ENCODE measurements at regions of chr6 and their contacts with region 1.

Region 1: GRCh38 chr6:35583893-35584688 is 71.4 kb upstream of the TULP1 start:
- DNase-seq: peak; percentile 76
- H3K4me3 ChIP-seq: no peak overlapping the region
- H3K27ac ChIP-seq: peak overlapping the region; percentile 7 to 45 (median 24)
- H3K4me1 ChIP-seq: peaks cover 6 to 42% (median 16%) of the 10 kb centered on the region in 4 donors
- H3K27me3 ChIP-seq: no peaks in the 10 kb centered on the region
- CTCF ChIP-seq: peak; percentile 70 to 79 (median 74)
- EP300 ChIP-seq: no peak
- POLR2A ChIP-seq: no peak

Region 2: DNA sequence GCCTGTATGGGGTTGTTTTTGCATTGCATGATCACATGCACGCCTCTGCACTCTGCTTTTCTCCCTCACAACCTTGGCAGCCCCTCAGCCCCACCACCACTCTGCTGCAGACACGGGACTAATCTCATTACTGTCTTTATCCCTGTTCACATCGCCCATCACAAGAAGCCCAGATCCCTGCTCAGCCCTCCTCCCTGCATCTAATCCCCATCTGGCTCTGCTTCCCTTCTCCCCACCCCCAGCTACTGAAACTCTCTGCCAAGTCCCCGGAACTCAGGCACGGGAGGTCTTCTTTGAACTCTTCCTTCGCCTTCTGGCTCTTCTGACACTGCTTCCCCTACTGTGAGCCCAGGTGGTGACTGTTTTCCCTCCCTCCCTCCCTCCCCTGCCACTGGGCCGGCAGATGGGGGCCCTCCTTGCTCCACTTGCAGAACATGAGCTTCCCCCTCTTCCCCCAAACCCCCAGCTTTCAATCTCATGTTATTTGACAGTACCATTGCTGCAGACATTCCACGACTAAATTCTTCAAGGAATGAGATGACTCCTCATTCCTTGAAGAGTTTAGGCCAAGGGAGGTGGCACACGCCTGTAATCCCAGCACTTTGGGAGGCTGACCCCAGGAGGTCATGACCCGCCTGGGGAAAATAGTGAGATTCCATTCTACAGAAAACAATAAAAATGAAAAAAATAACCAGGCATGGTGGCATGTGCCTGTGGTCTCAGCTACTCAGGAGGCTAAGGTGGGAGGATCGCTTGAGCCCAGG is 49.5 kb before region 1 on chr6:
- in situ Hi-C with region 1: no loop called
- intact Hi-C with region 1: no loop called
- DNase-seq: no peak
- H3K4me3 ChIP-seq: no peak overlapping the region
- H3K27ac ChIP-seq: no peak overlapping the region
- H3K4me1 ChIP-seq: peaks cover 0 to 4% (median 0%) of the 10 kb centered on the region in 4 donors
- H3K27me3 ChIP-seq: no peaks in the 10 kb centered on the region
- CTCF ChIP-seq: no peak
- EP300 ChIP-seq: no peak
- POLR2A ChIP-seq: no peak

Region 3: DNA sequence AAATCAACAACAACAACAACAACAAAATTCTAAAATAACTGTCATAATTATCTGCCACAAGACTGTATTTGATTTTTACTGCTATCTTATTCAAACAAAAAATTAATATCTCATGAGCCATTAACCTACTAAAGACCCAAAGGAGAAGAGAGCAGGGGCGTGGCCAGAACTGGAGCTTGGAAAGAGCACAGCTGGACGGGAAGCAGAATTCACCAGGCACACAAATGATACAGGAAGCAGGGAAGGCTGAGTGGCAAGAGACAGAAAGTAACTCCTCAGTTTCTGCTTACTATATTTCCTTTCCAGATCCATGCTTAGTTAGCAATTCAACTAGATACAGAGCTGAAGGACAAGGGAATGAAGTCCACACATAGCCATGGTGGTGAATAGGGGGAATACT is 50.2 kb after region 1 on chr6:
- in situ Hi-C with region 1: loop called in 1 of 4 experiments (anchors 10 kb)
- intact Hi-C with region 1: no loop called
- DNase-seq: no peak
- H3K4me3 ChIP-seq: no peak overlapping the region
- H3K27ac ChIP-seq: no peak overlapping the region
- H3K4me1 ChIP-seq: peaks cover 0 to 11% (median 2%) of the 10 kb centered on the region in 4 donors
- H3K27me3 ChIP-seq: no peaks in the 10 kb centered on the region
- CTCF ChIP-seq: no peak
- EP300 ChIP-seq: no peak
- POLR2A ChIP-seq: no peak

Region 4: GRCh38 chr6:35650015-35650414 is 65.9 kb after region 1 on chr6:
- in situ Hi-C with region 1: no loop called
- intact Hi-C with region 1: no loop called
- DNase-seq: no peak
- H3K4me3 ChIP-seq: no peak overlapping the region
- H3K27ac ChIP-seq: no peak overlapping the region
- H3K4me1 ChIP-seq: peaks cover 0 to 20% (median 3%) of the 10 kb centered on the region in 4 donors
- H3K27me3 ChIP-seq: no peaks in the 10 kb centered on the region
- CTCF ChIP-seq: no peak
- EP300 ChIP-seq: no peak
- POLR2A ChIP-seq: no peak

Region 5: DNA sequence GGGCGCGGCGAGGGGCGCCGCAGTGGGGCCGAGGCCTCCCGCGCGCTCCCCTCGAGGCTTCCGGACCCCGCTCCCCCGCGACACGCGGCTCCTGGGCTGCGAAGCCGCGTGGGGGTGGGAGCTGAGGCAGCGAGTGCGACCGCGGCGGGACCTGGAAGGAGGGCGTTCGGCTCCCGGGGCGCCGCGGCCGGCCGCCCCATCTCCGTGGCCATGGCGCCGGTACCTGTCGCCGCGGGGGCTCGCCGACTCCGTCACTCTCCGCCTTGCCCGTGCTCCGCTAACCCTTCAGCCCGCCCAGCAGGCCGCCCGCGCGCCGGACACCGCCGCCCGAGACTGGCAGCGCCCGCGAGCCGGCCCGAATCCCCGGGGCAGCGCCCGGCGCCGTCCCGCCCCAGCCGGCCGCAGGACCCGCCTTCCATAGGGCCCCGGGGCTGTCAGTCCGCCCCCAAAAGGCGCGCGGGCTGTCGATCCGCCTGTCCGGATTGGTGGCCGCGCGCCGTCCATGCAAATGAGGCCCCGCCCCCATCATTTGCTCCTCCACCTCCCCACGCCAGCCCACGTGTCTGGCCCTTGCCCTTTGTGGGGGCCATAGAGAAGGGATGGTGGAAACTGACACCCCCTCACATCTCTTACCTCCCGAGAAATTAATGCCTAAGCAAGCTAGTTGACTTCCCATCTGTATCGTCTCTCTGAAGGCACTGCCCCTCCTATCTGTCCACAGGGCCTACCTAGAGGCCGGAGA is 104.7 kb after region 1 on chr6 and contains the start of gene FKBP5:
- in situ Hi-C with region 1: no loop called
- intact Hi-C with region 1: loop called (anchors 10 kb)
- DNase-seq: peak; percentile 97
- H3K4me3 ChIP-seq: peak within 1 kb of the TSS; percentile 84 to 98 (median 92)
- H3K27ac ChIP-seq: peak within 1 kb of the TSS; percentile 97 to 99 (median 98)
- H3K4me1 ChIP-seq: peaks cover 18 to 37% (median 30%) of the 10 kb centered on the region in 4 donors
- H3K27me3 ChIP-seq: no peaks in the 10 kb centered on the region
- CTCF ChIP-seq: peak in 1 of 5 experiments; percentile 24
- EP300 ChIP-seq: no peak
- POLR2A ChIP-seq: peak; percentile 81
- total RNA-seq, gene FKBP5: 82.8 to 299 (median 254) TPM